Left cardiac atrium (tissue), 4 donors: ENCODE measurements at regions of chr18 and their contacts with region 1.

Region 1: DNA sequence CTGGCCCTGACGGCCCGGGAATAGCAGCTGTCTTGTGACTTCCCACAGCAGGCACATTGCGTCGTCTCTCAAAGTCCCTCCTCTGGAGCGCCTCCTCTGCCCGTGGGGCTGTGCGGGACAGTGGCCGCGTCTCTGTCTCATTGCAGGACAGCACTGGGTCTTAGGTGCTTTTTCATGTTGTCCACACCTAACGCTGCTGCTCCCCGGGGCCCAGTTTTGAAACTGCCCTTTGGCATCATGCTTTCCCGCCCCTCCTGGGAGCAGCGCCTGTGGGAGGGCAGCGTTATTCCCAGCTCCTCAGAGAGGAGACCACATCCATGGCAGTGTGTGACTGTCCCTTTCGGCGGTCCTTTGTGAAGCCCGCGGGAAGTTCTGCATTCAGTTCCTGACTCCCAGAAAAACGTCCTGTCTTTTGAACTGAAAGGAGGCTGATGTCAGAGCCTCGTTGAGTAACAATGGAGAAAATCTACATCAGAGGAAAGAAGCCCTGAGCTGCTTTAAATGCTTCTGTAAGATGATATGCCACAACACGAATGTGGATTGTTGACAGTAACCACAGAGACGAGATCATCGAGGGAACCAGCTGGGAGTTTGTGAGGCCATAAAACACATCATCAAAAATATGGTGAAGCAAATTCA is 226.0 kb downstream of the FAM210A start:
- DNase-seq: peak; percentile 61
- ATAC-seq: peak; percentile 62 to 77

Region 2: GRCh38 chr18:12420831-12421421 is 1079.4 kb before region 1 on chr18:
- intact Hi-C with region 1: no loop called
- DNase-seq: no peak
- ATAC-seq: peak; percentile 55 to 66

Region 3: GRCh38 chr18:13452388-13452811 is 47.9 kb before region 1 on chr18:
- intact Hi-C with region 1: loop called in 1 of 2 experiments (anchors 5 kb)
- DNase-seq: no peak
- ATAC-seq: peak; percentile 23 to 83